ENCODE measurements at regions of chr5 and their contacts with region 1.

Region 1: DNA sequence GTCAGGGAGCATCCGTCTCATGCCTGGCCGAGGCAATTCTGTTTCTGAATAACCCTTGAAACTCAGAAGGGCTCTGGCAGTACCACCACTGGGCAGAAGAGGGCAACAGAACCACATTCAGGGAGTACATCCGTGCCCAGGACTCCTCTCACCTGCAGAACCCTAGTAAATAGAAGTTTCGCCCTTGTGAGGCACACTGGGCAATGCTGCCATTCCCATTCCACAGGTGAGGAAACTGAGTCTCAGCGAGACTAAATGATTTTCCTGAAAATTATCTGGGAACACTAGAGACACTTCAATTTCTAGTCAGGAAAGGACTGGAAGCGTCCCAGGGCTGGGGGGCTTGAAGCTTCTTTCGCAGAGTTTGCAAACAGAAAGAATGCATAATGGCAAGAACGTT is 74.7 kb downstream of the FGF1 start:
- DNase-seq: peak; percentile 75
- H3K4me3 ChIP-seq: no peak overlapping the region
- H3K27ac ChIP-seq: no peak overlapping the region
- H3K4me1 ChIP-seq: peaks cover 26% of the 10 kb centered on the region
- H3K27me3 ChIP-seq: no peaks in the 10 kb centered on the region

Region 2: GRCh38 chr5:142327111-142327842 is 283.9 kb before region 1 on chr5:
- in situ Hi-C with region 1: no loop called
- DNase-seq: peak; percentile 95
- H3K4me3 ChIP-seq: peak overlapping the region; percentile 39
- H3K27ac ChIP-seq: peak overlapping the region; percentile 91
- H3K4me1 ChIP-seq: peaks cover 25% of the 10 kb centered on the region
- H3K27me3 ChIP-seq: no peaks in the 10 kb centered on the region

Region 3: DNA sequence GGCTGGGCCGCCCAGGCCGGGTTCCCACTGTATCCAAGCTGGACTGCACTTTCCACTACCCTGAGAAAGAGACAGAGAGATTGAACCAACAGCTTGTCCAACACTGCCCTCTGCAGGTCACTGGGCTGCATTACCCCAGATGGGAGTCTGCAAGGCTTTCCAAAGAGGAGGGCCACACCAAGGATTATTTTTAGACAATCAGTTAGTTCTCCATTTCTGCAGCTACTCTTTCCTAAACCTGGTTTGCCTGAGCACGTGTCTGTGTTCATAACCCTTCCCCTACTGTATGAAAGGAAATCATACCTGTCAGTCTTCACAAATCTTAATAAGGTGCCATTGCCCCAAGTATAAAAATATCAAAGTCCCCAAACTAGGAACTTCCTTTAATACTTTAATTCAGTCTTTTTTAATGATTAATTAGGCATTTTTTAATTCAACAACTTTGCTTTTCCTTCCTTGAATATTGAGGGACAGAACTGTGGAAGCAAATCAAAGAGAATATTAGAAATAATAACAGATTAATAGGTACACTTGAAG is 88.1 kb after region 1 on chr5:
- in situ Hi-C with region 1: loop called (anchors 5 kb)
- DNase-seq: peak; percentile 87
- H3K4me3 ChIP-seq: no peak overlapping the region
- H3K27ac ChIP-seq: no peak overlapping the region
- H3K4me1 ChIP-seq: peaks cover 23% of the 10 kb centered on the region
- H3K27me3 ChIP-seq: no peaks in the 10 kb centered on the region

Region 4: GRCh38 chr5:142888469-142889085 is 277.4 kb after region 1 on chr5:
- in situ Hi-C with region 1: loop called (anchors 10 kb)
- DNase-seq: peak; percentile 75
- H3K4me3 ChIP-seq: no peak overlapping the region
- H3K27ac ChIP-seq: no peak overlapping the region
- H3K4me1 ChIP-seq: peaks cover 9% of the 10 kb centered on the region
- H3K27me3 ChIP-seq: no peaks in the 10 kb centered on the region

Measured in GM23248 (cell line).